ENCODE measurements at regions of chr3 and their contacts with region 1.

Region 1: DNA sequence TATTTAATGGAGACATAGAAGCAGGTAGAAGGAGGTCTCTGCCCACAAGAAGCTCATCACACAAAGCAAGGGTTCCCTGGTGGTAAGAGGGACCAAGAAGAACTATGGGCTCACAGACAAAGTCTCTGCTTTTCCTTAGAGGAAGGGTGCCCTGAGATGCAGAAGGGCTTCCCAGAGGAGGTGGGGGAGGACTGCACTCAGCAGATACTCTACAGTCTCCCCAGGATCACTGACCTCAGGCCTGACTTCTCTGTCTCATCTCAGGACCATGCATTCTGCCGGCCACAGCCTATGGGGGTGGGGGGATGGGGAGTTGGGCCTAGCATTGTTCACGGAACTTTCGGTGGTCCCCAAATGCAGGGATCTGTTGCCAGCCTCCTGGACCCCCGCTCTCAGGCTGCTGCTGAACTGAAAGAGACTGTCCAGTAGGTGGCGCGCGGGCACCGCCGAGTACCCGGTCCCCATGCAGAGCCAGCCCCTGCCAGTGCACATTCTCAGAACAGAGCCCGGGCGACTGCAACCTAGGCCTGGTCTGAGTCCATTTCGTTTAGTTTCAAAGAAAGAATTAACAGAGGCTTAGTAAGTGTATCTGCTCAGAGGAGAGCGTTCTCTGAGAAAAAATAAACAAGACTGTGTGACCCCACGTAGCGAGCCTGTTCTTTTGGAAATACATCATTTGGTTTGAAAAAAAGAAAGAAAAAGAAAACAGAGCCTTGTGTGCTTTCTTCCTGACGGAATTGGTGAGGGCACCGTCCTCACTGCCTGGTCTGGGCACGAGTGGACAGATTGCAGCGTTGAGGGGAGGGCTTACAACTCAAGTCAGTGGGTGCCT is 74.1 kb downstream of the LRTM1 start:
- DNase-seq: no peak
- ATAC-seq: peak; percentile 77
- H3K4me3 ChIP-seq: no peak overlapping the region
- H3K27ac ChIP-seq: no peak overlapping the region
- H3K4me1 ChIP-seq: no peaks in the 10 kb centered on the region
- H3K27me3 ChIP-seq: no peaks in the 10 kb centered on the region
- CTCF ChIP-seq: peak; percentile 16 to 82 (median 58); a peak in 3 of 6 replicates
- POLR2A ChIP-seq: no peak
- RAD21 ChIP-seq: peak; percentile 57

Region 2: GRCh38 chr3:55091381-55092225 is 237.8 kb after region 1 on chr3:
- CTCF ChIA-PET with region 1: no interaction called
- POLR2A ChIA-PET with region 1: no interaction called
- RAD21 ChIA-PET with region 1: no interaction called
- intact Hi-C with region 1: no loop called
- DNase-seq: no peak
- ATAC-seq: no peak
- H3K4me3 ChIP-seq: no peak overlapping the region
- H3K27ac ChIP-seq: no peak overlapping the region
- H3K4me1 ChIP-seq: no peaks in the 10 kb centered on the region
- H3K27me3 ChIP-seq: no peaks in the 10 kb centered on the region
- CTCF ChIP-seq: no peak
- POLR2A ChIP-seq: no peak
- RAD21 ChIP-seq: no peak

Region 3: DNA sequence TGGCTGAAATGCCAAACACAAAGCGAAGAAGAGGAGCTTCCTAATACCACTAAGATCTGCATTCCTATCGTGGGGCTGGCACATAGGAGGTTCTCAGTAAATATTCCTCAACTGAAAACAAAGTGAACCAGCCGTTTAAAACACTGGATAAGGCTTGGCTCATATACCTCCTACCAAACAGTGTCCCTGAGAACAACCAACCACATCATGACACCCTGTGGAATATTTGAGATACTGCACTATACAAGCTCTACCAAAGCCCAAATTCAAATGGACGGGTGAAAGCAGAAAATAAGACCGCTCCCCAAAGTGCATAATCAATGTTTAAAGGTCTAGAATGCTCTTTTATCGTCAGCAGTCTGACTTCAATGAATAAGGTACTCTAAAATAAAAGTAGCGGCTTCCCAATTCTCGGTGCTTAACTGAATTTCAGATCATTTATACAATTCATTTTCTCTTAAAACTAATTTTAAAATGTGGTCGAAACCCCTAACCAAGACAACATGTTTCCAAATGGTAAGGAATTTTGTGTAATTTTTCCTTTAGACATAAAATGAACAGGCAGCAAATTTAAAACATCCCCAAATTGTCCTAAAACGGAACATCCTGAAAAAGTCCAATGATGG is 1188.7 kb after region 1 on chr3:
- CTCF ChIA-PET with region 1: no interaction called
- POLR2A ChIA-PET with region 1: no interaction called
- RAD21 ChIA-PET with region 1: no interaction called
- intact Hi-C with region 1: loop called (anchors 10 kb)
- DNase-seq: no peak
- ATAC-seq: no peak
- H3K4me3 ChIP-seq: no peak overlapping the region
- H3K27ac ChIP-seq: no peak overlapping the region
- H3K4me1 ChIP-seq: no peaks in the 10 kb centered on the region
- H3K27me3 ChIP-seq: no peaks in the 10 kb centered on the region
- CTCF ChIP-seq: peak in 1 of 3 experiments; percentile 27; a peak in 2 of 6 replicates
- POLR2A ChIP-seq: no peak
- RAD21 ChIP-seq: 0 out of 2 replicates have a peak, but pooled peaks have one; percentile 7